ENCODE measurements at regions of chr9 and their contacts with region 1.

Region 1: DNA sequence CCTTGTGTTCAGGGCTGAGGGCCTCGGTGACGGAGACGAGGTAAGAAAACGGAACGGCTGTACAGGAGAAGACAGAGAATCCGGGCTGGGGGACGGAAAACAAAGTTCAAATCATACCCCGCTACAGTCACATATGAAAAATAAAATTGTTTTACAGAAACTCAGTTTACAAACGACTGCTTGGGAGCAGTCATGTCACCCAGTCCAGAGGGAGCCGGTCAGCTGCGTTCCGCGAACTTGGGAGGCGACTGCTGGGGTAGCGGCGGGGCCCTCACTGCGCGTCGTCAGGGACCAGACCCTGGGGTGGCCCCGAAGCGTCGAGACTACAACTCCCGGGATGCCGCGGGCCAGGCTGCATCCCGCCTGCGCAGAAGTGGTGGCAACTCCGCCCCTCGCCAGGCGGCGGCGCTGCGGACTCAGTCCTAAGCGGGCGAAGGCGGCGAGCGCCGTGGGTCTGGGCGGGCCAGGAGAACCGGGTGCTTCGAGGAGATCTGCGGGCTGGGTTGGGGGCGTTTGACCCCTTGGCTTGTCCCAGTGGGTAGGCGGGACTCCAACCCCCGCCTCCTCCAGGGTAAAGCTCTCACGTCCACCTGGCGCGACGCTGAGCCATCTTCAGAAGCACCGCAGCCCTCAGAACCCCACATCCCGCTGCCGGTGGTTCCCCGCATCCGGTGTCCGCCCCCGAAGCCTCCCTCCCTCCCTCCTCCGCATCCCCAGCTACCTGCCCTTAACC is 4.0 kb downstream of the SIT1 start:
- DNase-seq: peak; percentile 93
- H3K4me3 Mint-ChIP-seq: peak overlapping the region; percentile 88
- H3K27ac Mint-ChIP-seq: peak overlapping the region; percentile 92
- H3K4me1 Mint-ChIP-seq: peaks cover 51% of the 10 kb centered on the region
- H3K27me3 Mint-ChIP-seq: no peaks in the 10 kb centered on the region

Region 2: GRCh38 chr9:35079426-35080341 is 567.0 kb before region 1 on chr9 and contains the start of gene FANCG:
- CTCF ChIA-PET with region 1: no interaction called
- POLR2A ChIA-PET with region 1: interaction called, 19 read pairs
- DNase-seq: peak; percentile 89
- H3K4me3 Mint-ChIP-seq: peak within 1 kb of the TSS; percentile 95
- H3K27ac Mint-ChIP-seq: peak within 1 kb of the TSS; percentile 99
- H3K4me1 Mint-ChIP-seq: peaks cover 40% of the 10 kb centered on the region
- H3K27me3 Mint-ChIP-seq: no peaks in the 10 kb centered on the region
- total RNA-seq, gene FANCG: 97.0 to 100 TPM

Region 3: GRCh38 chr9:35333551-35333950 is 313.1 kb before region 1 on chr9:
- CTCF ChIA-PET with region 1: no interaction called
- POLR2A ChIA-PET with region 1: no interaction called
- DNase-seq: no peak
- H3K4me3 Mint-ChIP-seq: no peak overlapping the region
- H3K27ac Mint-ChIP-seq: no peak overlapping the region
- H3K4me1 Mint-ChIP-seq: no peaks in the 10 kb centered on the region
- H3K27me3 Mint-ChIP-seq: peaks cover 1% of the 10 kb centered on the region

Region 4: GRCh38 chr9:35611230-35611797 is 35.4 kb before region 1 on chr9:
- CTCF ChIA-PET with region 1: interaction called, 51 read pairs
- POLR2A ChIA-PET with region 1: interaction called, 100 read pairs
- DNase-seq: peak; percentile 61
- H3K4me3 Mint-ChIP-seq: no peak overlapping the region
- H3K27ac Mint-ChIP-seq: no peak overlapping the region
- H3K4me1 Mint-ChIP-seq: peaks cover 16% of the 10 kb centered on the region
- H3K27me3 Mint-ChIP-seq: peaks cover 3% of the 10 kb centered on the region

Region 5: GRCh38 chr9:35636135-35636876 is 10.4 kb before region 1 on chr9:
- CTCF ChIA-PET with region 1: interaction called, 10 read pairs
- POLR2A ChIA-PET with region 1: interaction called, 8 read pairs
- DNase-seq: no peak
- H3K4me3 Mint-ChIP-seq: no peak overlapping the region
- H3K27ac Mint-ChIP-seq: no peak overlapping the region
- H3K4me1 Mint-ChIP-seq: peaks cover 35% of the 10 kb centered on the region
- H3K27me3 Mint-ChIP-seq: no peaks in the 10 kb centered on the region

Region 6: GRCh38 chr9:35690431-35691333 is 44.0 kb after region 1 on chr9:
- CTCF ChIA-PET with region 1: interaction called, 38 read pairs
- POLR2A ChIA-PET with region 1: interaction called, 24 read pairs
- DNase-seq: peak; percentile 42
- H3K4me3 Mint-ChIP-seq: peak overlapping the region; percentile 75
- H3K27ac Mint-ChIP-seq: peak overlapping the region; percentile 21
- H3K4me1 Mint-ChIP-seq: peaks cover 24% of the 10 kb centered on the region
- H3K27me3 Mint-ChIP-seq: no peaks in the 10 kb centered on the region

Region 7: GRCh38 chr9:35748858-35749514 is 102.3 kb after region 1 on chr9 and contains the starts of genes GBA2 and RGP1:
- CTCF ChIA-PET with region 1: interaction called, 5 read pairs
- POLR2A ChIA-PET with region 1: interaction called, 15 read pairs
- DNase-seq: peak; percentile 76
- H3K4me3 Mint-ChIP-seq: peak within 1 kb of the TSS; percentile 94
- H3K27ac Mint-ChIP-seq: peak within 1 kb of the TSS; percentile 91
- H3K4me1 Mint-ChIP-seq: peaks cover 52% of the 10 kb centered on the region
- H3K27me3 Mint-ChIP-seq: no peaks in the 10 kb centered on the region
- total RNA-seq, gene GBA2: 45.8 to 49.1 TPM
- total RNA-seq, gene RGP1: 29.1 to 29.5 TPM

Measured in activated CD4-positive, alpha-beta memory T cell treated with anti-CD3 and anti-CD28 coated beads, Interleukin-2, amount 10 ng/mL, durations not matched to agents 7 days and 5 days (primary cell).